Activated CD4-positive, alpha-beta T cell treated with anti-CD3 and anti-CD28 coated beads for 36 hours (primary cell): ENCODE measurements at regions of chr6 and their contacts with region 1.

Region 1: GRCh38 chr6:50816115-50816675 is 2.5 kb upstream of the TFAP2B start:
- DNase-seq: peak; percentile 83
- ATAC-seq: no peak
- H3K4me3 Mint-ChIP-seq: peak overlapping the region; percentile 65
- H3K27ac Mint-ChIP-seq: no peak overlapping the region
- H3K4me1 Mint-ChIP-seq: peaks cover 13% of the 10 kb centered on the region
- H3K27me3 Mint-ChIP-seq: peaks cover 56% of the 10 kb centered on the region

Region 2: GRCh38 chr6:50843842-50844241 is 27.6 kb after region 1 on chr6:
- CTCF ChIA-PET with region 1: interaction called, 3 read pairs
- POLR2A ChIA-PET with region 1: no interaction called
- intact Hi-C with region 1: loop called in 1 of 2 experiments (anchors 2 kb)
- DNase-seq: no peak
- ATAC-seq: no peak
- H3K4me3 Mint-ChIP-seq: no peak overlapping the region
- H3K27ac Mint-ChIP-seq: no peak overlapping the region
- H3K4me1 Mint-ChIP-seq: no peaks in the 10 kb centered on the region
- H3K27me3 Mint-ChIP-seq: peaks cover 70% of the 10 kb centered on the region

Region 3: GRCh38 chr6:51753635-51754034 is 937.4 kb after region 1 on chr6:
- CTCF ChIA-PET with region 1: no interaction called
- POLR2A ChIA-PET with region 1: no interaction called
- intact Hi-C with region 1: loop called in 1 of 2 experiments (anchors 10 kb)
- DNase-seq: peak; percentile 30
- ATAC-seq: no peak
- H3K4me3 Mint-ChIP-seq: no peak overlapping the region
- H3K27ac Mint-ChIP-seq: no peak overlapping the region
- H3K4me1 Mint-ChIP-seq: no peaks in the 10 kb centered on the region
- H3K27me3 Mint-ChIP-seq: no peaks in the 10 kb centered on the region

Region 4: GRCh38 chr6:51959744-51960383 is 1143.7 kb after region 1 on chr6:
- CTCF ChIA-PET with region 1: no interaction called
- POLR2A ChIA-PET with region 1: no interaction called
- intact Hi-C with region 1: loop called (anchors 1 kb)
- DNase-seq: peak; percentile 78
- ATAC-seq: no peak
- H3K4me3 Mint-ChIP-seq: no peak overlapping the region
- H3K27ac Mint-ChIP-seq: no peak overlapping the region
- H3K4me1 Mint-ChIP-seq: no peaks in the 10 kb centered on the region
- H3K27me3 Mint-ChIP-seq: peaks cover 5% of the 10 kb centered on the region